Activated CD4-positive, alpha-beta T cell treated with anti-CD3 and anti-CD28 coated beads for 36 hours (primary cell): ENCODE measurements at regions of chr16 and their contacts with region 1.

Region 1: GRCh38 chr16:21190599-21190998 is 20.8 kb downstream of the ZP2 start:
- DNase-seq: no peak
- ATAC-seq: no peak
- H3K4me3 Mint-ChIP-seq: no peak overlapping the region
- H3K27ac Mint-ChIP-seq: no peak overlapping the region
- H3K4me1 Mint-ChIP-seq: peaks cover 26% of the 10 kb centered on the region
- H3K27me3 Mint-ChIP-seq: peaks cover 5% of the 10 kb centered on the region

Region 2: DNA sequence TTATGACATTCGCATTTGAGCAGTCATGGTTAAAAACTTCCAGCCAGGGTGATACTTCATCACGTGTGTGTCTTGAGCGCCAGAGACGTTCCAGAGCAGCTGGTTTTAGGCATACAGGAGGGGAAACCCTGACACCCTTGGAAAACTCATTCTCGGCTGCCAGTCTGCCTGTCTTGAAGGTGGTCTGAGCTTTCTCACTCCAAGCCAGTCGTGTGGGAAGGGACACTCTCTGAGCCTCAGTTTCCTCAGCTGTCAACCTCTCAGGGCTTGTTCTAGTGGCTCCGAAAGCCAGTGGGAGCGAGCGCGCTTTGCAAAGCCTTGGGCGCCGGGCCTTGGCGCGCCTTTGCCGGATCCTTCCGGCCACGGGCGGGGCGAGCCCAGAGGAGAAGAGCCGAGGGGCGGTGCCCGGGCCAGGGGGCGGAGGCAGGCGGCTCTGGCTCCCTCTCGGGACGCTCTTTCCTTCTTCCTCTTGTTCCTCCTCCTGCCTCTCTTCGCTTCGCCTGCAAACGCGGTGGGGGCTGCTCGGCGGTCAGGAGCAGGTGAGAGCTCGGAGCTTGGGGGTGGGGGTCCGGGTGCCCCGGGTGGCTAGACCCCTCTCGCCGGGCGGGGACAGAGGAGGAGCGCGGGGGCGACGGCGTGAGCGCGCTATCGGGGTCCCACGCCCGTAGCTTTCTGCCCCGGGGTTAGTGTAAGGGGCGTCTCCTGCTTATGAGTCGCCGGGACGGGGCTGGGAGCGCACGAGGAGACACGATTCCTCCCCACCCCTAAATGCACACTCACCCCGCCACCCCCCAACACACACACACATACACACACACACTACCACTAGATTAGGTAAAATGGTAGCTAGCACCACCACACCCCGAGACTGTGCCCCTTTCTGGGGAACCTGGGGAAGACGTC is 32.1 kb before region 1 on chr16 and contains the start of gene LDAF1:
- CTCF ChIA-PET with region 1: interaction called, 10 read pairs
- POLR2A ChIA-PET with region 1: no interaction called
- intact Hi-C with region 1: no loop called
- DNase-seq: peak; percentile 90
- ATAC-seq: peak; percentile 99
- H3K4me3 Mint-ChIP-seq: peak within 1 kb of the TSS; percentile 88
- H3K27ac Mint-ChIP-seq: peak within 1 kb of the TSS; percentile 81
- H3K4me1 Mint-ChIP-seq: peaks cover 20% of the 10 kb centered on the region
- H3K27me3 Mint-ChIP-seq: no peaks in the 10 kb centered on the region
- total RNA-seq, gene LDAF1: 7.2 to 11.7 TPM